Activated CD4-positive, alpha-beta T cell treated with anti-CD3 and anti-CD28 coated beads for 36 hours (primary cell): ENCODE measurements at regions of chr6 and their contacts with region 1.

Region 1: DNA sequence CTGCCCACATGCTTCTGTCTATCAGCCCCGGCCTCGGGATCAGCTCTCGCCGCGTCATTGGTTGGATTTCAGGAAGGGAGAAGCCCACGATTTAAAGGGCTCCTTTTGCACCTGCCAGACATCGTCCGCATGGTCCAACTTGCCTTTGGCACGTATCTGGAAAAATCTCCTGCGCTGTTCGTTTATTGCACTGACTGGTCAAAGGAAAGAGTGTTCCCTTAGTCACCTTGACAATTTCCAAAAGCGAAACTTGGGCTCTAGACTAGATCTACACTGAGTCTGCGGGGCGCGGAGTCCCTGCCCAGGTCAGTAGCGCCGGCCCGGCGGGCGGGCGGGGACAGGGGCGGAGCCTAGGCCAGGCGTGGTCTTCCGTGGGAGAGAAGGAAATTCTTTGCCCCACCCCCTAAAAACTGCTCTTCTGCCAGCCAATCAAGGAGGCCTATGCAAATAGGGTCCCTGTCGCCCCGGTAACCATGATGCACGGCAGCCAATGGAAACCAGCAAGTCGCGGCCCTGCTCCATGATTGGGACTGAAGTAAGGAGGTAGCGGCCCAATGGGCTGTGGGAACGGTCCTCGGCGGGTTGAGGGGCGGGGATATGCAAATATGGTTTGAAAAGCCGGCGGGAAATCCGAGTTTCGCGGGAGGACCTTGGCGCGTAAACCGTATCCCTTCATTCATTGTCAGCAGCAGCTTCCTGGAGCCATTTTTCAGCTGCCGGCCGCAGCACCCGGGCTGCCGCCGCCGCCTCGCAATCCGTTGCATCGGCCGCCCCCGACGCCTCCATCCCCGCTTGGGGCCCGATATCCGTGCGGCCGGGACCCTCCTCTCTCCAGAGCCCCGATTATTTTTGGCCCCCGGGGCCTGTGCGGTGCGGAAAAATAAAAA is at the start of gene E2F3:
- DNase-seq: peak; percentile 99
- ATAC-seq: peak; percentile 84
- H3K4me3 Mint-ChIP-seq: peak within 1 kb of the TSS; percentile 96
- H3K27ac Mint-ChIP-seq: peak within 1 kb of the TSS; percentile 99
- H3K4me1 Mint-ChIP-seq: peaks cover 28% of the 10 kb centered on the region
- H3K27me3 Mint-ChIP-seq: no peaks in the 10 kb centered on the region
- total RNA-seq, gene E2F3: 17.3 to 17.5 TPM

Region 2: DNA sequence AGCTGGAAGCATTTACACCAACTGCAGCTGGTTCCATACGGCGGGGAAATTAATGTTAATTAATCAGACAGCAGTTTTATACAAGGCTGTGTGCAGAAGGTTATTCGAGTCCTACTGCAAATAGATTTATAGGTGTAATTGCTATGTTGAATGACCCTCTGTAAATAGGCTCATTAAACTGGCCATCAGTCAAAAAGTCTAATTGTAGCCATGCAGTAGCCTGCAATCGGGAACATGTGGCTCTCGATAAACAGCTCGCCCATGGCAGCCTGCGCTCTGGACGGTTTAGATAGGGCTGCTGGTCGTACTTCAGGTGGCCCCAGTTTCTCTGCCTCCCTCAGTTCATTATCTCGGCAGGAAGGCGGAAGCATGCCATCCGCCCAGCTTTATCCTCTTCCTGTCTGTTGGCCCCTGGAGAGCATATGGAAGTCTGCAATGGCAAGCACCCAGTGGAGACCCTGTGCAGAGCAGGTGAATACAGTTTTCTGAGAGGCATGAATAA is 332.4 kb before region 1 on chr6:
- CTCF ChIA-PET with region 1: no interaction called
- POLR2A ChIA-PET with region 1: no interaction called
- intact Hi-C with region 1: no loop called
- DNase-seq: no peak
- ATAC-seq: no peak
- H3K4me3 Mint-ChIP-seq: no peak overlapping the region
- H3K27ac Mint-ChIP-seq: no peak overlapping the region
- H3K4me1 Mint-ChIP-seq: no peaks in the 10 kb centered on the region
- H3K27me3 Mint-ChIP-seq: peaks cover 5% of the 10 kb centered on the region

Region 3: DNA sequence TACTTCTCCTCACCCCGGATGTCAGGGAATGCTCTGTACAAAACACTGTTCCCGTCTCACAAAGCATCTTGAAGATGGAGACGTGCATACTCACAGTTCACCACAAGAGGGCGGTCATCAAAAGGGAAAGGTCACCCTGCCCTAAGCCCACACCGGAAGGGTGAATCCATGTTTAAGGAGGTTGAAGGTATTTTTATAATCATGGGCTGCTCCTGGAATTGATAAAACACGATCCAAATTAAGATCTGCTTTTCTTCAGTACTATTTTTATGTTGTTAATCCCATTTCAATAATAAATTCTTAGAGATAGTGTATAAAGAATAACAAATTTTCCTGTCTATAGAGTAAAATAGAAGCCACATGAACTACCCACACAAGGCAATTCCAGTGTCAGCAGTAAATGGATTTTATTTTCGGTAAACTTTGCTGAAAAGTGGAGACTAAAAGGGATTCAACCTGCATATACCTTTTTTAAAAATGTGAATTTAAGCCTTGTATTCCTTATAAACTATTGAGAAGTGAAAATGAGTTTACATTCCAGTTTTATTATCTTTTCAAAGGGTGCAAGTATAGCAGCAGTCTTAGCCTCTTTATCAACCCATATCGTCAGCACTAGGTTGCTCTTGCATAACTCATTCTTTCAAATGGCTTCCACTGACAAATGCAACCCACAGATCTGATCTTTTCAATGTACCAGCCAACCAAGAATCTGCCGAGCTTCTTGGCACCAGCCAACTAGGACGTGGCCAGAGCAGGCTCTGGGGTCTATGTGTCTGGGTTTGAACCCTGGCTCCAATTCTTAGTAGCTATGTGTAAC is 109.5 kb before region 1 on chr6:
- CTCF ChIA-PET with region 1: interaction called, 12 read pairs
- POLR2A ChIA-PET with region 1: no interaction called
- intact Hi-C with region 1: loop called (anchors 1 kb)
- DNase-seq: peak; percentile 87
- ATAC-seq: peak; percentile 90
- H3K4me3 Mint-ChIP-seq: peak overlapping the region; percentile 16
- H3K27ac Mint-ChIP-seq: peak overlapping the region; percentile 8
- H3K4me1 Mint-ChIP-seq: peaks cover 21% of the 10 kb centered on the region
- H3K27me3 Mint-ChIP-seq: no peaks in the 10 kb centered on the region

Region 4: GRCh38 chr6:20366091-20366832 is 35.2 kb before region 1 on chr6:
- CTCF ChIA-PET with region 1: interaction called, 10 read pairs
- POLR2A ChIA-PET with region 1: interaction called, 4 read pairs
- intact Hi-C with region 1: loop called (anchors 2 to 5 kb)
- DNase-seq: peak; percentile 47
- ATAC-seq: peak; percentile 21
- H3K4me3 Mint-ChIP-seq: no peak overlapping the region
- H3K27ac Mint-ChIP-seq: peak overlapping the region; percentile 78
- H3K4me1 Mint-ChIP-seq: peaks cover 56% of the 10 kb centered on the region
- H3K27me3 Mint-ChIP-seq: no peaks in the 10 kb centered on the region

Region 5: GRCh38 chr6:20534295-20535262 is 133.1 kb after region 1 on chr6 and contains the start of gene CDKAL1:
- CTCF ChIA-PET with region 1: interaction called, 12 read pairs
- POLR2A ChIA-PET with region 1: interaction called, 12 read pairs
- intact Hi-C with region 1: loop called (anchors 1 kb)
- DNase-seq: peak; percentile 94
- ATAC-seq: peak; percentile 89
- H3K4me3 Mint-ChIP-seq: peak within 1 kb of the TSS; percentile 94
- H3K27ac Mint-ChIP-seq: peak within 1 kb of the TSS; percentile 97
- H3K4me1 Mint-ChIP-seq: peaks cover 36% of the 10 kb centered on the region
- H3K27me3 Mint-ChIP-seq: no peaks in the 10 kb centered on the region
- total RNA-seq, gene CDKAL1: 22.1 to 23.4 TPM